Heart right ventricle (tissue), 16 donors: ENCODE measurements at regions of chr7 and their contacts with region 1.

Region 1: GRCh38 chr7:55365675-55366460 is 731 bp downstream of the LANCL2 start:
- DNase-seq: peak; percentile 94 to 96
- ATAC-seq: peak; percentile 98 to 100 (median 99)
- H3K4me3 ChIP-seq: peak overlapping the region; percentile 78 to 99 (median 93)
- H3K27ac ChIP-seq: peak overlapping the region; percentile 98 to 100 (median 100)
- H3K4me1 ChIP-seq: peaks cover 4 to 27% (median 22%) of the 10 kb centered on the region in 9 donors
- H3K27me3 ChIP-seq: no peaks in the 10 kb centered on the region
- CTCF ChIP-seq: peak in 5 of 9 donors; percentile 36 to 58 (median 52)

Region 2: GRCh38 chr7:54758702-54759592 is 606.9 kb before region 1 on chr7 and contains the start of gene SEC61G:
- intact Hi-C with region 1: loop called in 2 of 10 experiments (anchors 5 to 10 kb)
- DNase-seq: peak; percentile 97 to 98
- ATAC-seq: peak; percentile 98 to 100 (median 99)
- H3K4me3 ChIP-seq: peak within 1 kb of the TSS; percentile 69 to 98 (median 94)
- H3K27ac ChIP-seq: peak within 1 kb of the TSS; percentile 63 to 96 (median 90)
- H3K4me1 ChIP-seq: peaks cover 0 to 45% (median 37%) of the 10 kb centered on the region in 9 donors
- H3K27me3 ChIP-seq: no peaks in the 10 kb centered on the region
- CTCF ChIP-seq: no peak
- total RNA-seq, gene SEC61G: 73.7 to 126 (median 90.9) TPM

Region 3: DNA sequence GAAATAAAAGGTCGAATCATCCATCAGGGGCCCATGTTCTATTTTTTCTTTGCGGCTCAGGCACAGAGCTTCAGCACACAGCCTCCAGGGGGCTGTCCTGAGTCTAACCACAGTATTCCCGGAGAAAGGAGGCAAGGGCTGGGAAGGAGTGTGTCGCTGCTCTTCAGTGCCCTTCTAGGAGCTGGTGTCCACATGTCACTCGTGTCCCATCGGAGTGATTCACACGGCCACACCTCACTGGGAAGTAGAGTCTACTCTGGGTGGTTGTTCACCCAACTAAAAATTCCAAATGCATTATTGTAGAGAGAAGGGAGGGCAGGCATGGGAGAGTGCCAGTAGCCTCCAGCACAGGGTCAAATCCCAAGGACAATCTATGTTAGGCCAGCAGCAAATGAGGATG is 115.6 kb before region 1 on chr7:
- intact Hi-C with region 1: no loop called
- DNase-seq: no peak
- ATAC-seq: no peak
- H3K4me3 ChIP-seq: no peak overlapping the region
- H3K27ac ChIP-seq: no peak overlapping the region
- H3K4me1 ChIP-seq: peaks cover 0 to 13% (median 10%) of the 10 kb centered on the region in 9 donors
- H3K27me3 ChIP-seq: peaks cover 0 to 37% (median 18%) of the 10 kb centered on the region in 7 donors
- CTCF ChIP-seq: peak; percentile 9 to 56 (median 48)

Region 4: GRCh38 chr7:55280031-55280454 is 85.8 kb before region 1 on chr7:
- intact Hi-C with region 1: loop called in 1 of 10 experiments (anchors 10 kb)
- DNase-seq: peak in 1 of 2 donors; percentile 67
- ATAC-seq: peak; percentile 71 to 90 (median 86)
- H3K4me3 ChIP-seq: no peak overlapping the region
- H3K27ac ChIP-seq: no peak overlapping the region
- H3K4me1 ChIP-seq: no peaks in the 10 kb centered on the region
- H3K27me3 ChIP-seq: peaks cover 0 to 5% (median 0%) of the 10 kb centered on the region in 7 donors
- CTCF ChIP-seq: peak; percentile 34 to 78 (median 65)

Region 5: DNA sequence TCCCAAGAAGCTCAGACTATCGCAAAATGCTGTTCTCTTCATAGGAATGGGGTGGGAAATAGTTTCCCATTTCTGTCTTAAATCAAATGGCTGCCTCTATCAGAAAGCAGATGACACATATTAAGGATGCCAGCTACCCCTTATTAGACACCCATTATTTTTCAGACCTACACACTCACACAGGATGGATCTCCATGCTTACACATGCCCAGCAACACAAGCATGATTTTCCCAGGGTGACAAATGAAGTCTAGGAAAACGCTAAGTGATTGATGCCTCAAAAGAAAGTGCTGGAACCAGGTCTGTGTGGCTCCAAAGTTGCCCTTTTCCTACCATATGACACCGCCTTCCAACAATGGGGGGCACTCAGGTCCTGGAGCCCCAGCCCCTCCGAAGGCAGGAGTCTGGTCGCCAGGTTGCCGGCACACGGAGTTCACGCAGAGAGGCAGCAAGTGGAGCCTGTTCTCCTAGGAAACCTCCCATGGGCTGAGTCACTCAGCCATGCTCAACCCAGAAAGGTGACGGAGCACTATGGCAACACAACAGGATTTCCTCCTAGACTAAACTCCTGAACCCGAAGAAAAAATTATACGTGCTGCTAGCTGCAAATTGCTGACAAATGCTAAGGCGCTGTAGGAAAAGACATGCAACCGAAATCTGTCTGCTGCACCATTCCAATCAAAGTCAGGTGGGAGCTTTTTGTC is 186.6 kb after region 1 on chr7:
- intact Hi-C with region 1: loop called in 1 of 10 experiments (anchors 10 kb)
- DNase-seq: peak in 1 of 2 donors; percentile 59
- ATAC-seq: peak in 7 of 8 donors; percentile 78 to 89 (median 87)
- H3K4me3 ChIP-seq: peak overlapping the region in 2 of 10 donors; percentile 8 to 14
- H3K27ac ChIP-seq: peak overlapping the region in 9 of 10 donors; percentile 24 to 79 (median 53)
- H3K4me1 ChIP-seq: peaks cover 0 to 66% (median 25%) of the 10 kb centered on the region in 9 donors
- H3K27me3 ChIP-seq: no peaks in the 10 kb centered on the region
- CTCF ChIP-seq: no peak

Region 6: DNA sequence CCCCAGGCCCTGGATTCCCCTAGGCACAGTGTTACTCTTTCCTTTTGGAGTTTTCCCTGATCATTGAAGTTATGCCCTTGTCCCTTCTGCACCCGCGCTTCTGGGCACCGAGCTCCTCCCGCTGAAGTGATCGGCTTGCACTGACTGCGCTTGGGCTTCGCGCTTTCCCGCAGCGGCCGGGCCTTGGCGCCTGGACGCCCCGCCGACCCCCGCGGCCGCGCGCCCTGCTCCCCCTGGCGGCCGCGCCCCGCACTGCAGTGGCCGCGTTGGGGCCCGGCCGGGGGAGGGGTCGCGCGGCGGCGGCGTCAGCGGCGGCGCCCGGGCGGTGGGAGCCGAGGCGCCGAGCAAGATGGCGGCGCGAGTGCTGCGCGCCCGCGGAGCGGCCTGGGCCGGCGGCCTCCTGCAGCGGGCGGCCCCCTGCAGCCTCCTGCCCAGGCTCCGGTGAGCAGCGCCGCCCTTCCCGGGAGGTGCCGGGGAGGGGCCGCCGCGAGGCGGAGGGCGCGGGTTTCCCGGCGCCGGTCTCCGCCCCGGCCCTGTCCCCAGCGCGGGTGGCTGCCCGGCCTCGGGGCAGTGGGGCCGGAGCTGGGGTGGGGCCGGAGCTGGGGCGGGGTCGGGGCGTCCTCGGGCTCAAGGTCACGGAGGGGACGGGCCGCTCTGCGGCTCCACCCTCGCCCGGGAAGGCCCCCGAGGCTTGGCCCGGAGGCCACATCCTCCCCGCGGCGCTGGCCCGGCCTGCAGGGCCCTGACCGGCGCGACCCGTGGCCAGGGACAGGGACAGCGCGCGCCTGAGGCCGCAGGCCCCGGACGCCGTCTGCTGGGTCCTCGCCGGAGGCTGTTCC is 598.6 kb after region 1 on chr7 and contains the start of gene NIPSNAP2:
- intact Hi-C with region 1: loop called in 1 of 10 experiments (anchors 10 kb)
- DNase-seq: peak; percentile 86 to 91
- ATAC-seq: peak; percentile 93 to 96 (median 94)
- H3K4me3 ChIP-seq: peak within 1 kb of the TSS; percentile 26 to 80 (median 62)
- H3K27ac ChIP-seq: peak within 1 kb of the TSS; percentile 85 to 99 (median 98)
- H3K4me1 ChIP-seq: peaks cover 3 to 52% (median 28%) of the 10 kb centered on the region in 9 donors
- H3K27me3 ChIP-seq: no peaks in the 10 kb centered on the region
- CTCF ChIP-seq: peak; percentile 30 to 71 (median 55)
- total RNA-seq, gene NIPSNAP2: 221 to 455 (median 348) TPM